CD8-positive, alpha-beta T cell (primary cell): ENCODE measurements at regions of chr14 and their contacts with region 1.

Region 1: DNA sequence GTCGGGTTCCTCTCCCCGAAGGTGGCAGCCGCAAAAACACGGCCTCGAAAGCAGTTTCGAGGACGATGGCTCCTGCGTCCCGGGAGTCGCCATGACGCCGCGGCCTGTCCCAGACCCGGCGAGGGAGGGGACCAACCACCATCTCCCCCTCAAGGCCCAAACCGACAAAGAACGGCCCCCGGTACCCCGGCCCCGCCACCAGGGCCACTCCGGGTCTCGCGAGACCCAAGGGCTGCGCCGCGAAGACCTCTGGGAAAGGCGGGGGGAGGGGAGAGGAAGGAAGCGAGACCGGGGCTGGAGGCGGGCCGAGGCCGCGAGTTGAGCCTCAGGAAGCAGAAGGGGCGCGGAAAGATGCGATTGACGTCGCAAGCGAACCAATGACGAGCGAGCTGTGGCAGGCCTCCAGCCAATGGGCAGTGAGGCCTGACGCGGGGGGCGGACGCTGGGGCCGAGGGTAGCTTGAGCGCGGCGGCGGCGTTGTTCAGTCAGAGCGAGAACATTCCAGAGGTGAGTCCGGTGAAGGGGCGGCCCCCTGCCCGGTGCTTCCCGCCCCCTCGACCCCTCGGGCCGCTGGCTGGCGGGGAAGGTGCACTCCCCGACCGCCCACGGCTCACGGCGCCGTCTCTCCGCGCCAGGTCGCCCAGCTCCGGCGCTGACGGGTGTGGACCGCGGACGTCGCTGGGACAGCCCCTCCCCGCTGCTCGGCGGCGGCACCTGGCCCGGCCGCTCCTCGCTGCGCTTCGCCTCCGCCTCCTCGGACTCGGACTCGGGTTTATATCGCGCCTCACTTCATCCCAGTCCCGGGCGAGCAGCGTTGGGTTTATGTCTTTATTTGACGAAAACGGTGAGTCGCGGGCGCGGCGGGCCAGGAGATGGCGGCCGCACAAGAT is at the start of gene EIF5:
- DNase-seq: peak; percentile 97 to 100 (median 99)
- ATAC-seq: peak; percentile 86
- H3K4me3 ChIP-seq: peak within 1 kb of the TSS; percentile 85 to 92
- H3K4me3 Mint-ChIP-seq: peak within 1 kb of the TSS; percentile 97
- H3K27ac ChIP-seq: peak within 1 kb of the TSS; percentile 95 to 96
- H3K27ac Mint-ChIP-seq: peak within 1 kb of the TSS; percentile 99
- H3K4me1 ChIP-seq: peaks cover 23% of the 10 kb centered on the region
- H3K4me1 Mint-ChIP-seq: peaks cover 41% of the 10 kb centered on the region
- H3K27me3 ChIP-seq: no peaks in the 10 kb centered on the region
- H3K27me3 Mint-ChIP-seq: no peaks in the 10 kb centered on the region
- CTCF ChIP-seq: peak; percentile 38
- total RNA-seq, gene EIF5: 711 to 754 TPM

Region 2: DNA sequence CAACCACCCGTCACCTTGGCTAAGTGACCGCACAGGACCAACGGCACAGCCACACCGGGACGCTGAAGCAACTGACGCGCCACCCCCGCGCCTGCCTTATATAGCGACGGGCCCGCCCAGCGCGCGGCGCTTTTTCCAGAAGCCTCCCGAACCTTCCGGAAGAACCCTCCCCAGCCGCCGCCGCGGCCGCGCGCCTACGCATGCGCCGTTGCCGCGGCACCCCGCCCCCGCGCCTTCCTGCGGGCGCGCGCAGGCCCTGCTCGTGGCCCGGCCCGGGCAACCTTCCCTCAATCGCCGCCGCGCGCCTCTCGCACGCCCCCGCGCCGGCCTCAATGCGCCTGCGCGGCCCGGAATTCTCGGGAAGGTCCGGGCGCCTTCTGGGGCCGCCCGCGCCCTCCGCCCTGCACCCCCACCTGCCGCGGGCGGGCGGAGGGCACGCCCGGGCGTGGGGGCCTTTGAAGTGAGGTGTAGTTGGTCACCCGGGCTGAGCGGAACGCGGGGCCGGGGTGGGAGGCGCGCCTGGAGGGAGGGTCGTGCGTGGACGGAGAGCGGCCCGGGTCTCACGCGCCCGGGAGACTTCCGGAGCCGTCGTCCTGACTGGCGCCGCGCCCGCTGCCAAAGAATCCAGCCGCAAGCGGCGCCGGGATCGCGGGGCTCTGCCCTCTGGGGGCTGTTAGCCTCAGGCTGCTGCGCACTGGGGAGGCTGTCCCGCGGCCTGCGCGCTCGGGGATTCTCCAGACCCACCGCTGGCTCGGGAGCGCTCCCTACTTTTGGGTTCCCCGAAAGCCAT is 1246.8 kb before region 1 on chr14 and contains the start of gene HSP90AA1:
- CTCF ChIA-PET with region 1: no interaction called
- POLR2A ChIA-PET with region 1: no interaction called
- intact Hi-C with region 1: loop called in 1 of 2 experiments (anchors 2 kb)
- DNase-seq: peak; percentile 88 to 98 (median 95)
- ATAC-seq: peak; percentile 74
- H3K4me3 ChIP-seq: peak within 1 kb of the TSS; percentile 75 to 78
- H3K4me3 Mint-ChIP-seq: peak within 1 kb of the TSS; percentile 97
- H3K27ac ChIP-seq: peak within 1 kb of the TSS; percentile 96 to 97
- H3K27ac Mint-ChIP-seq: peak within 1 kb of the TSS; percentile 99
- H3K4me1 ChIP-seq: peaks cover 49% of the 10 kb centered on the region
- H3K4me1 Mint-ChIP-seq: peaks cover 58% of the 10 kb centered on the region
- H3K27me3 ChIP-seq: no peaks in the 10 kb centered on the region
- H3K27me3 Mint-ChIP-seq: no peaks in the 10 kb centered on the region
- CTCF ChIP-seq: no peak
- total RNA-seq, gene HSP90AA1: 532 to 539 TPM

Region 3: DNA sequence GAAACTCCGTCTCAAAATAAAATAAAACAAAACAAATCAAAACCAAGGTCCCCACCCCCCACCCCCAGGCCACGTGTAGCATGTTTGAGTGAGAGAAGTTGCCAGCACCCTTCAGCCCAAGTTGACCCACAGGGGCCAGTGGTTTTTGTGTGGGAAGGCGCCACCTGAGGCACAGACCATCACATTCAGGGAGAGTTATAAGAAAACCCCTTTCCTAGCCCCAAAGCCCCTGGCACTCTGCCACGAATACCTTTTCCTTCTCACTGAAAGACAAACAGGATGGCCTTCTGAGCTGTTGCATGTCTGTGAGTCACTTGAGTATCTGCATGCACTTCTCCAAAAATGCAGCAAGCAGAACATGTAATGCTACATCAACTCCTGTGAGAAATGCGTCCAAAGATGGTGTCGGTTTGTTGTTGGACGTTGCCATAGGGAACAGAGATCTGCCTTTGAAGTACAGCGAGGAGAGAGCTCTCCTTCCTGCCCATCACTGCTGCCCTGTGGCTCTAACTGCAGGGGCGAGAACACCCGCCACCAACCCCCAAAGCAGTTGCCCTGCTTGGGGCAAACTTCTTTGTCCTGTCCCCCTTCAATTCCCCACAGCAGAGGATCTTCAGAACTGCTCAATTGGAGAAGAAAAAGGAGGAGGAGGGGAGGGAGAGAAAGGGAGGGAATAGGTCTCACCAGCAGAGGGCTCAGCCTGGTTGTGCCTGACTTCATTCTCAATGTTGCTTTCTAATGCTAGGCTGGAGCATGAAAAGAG is 559.4 kb before region 1 on chr14:
- CTCF ChIA-PET with region 1: no interaction called
- POLR2A ChIA-PET with region 1: no interaction called
- intact Hi-C with region 1: loop called (anchors 5 kb)
- DNase-seq: peak; percentile 32 to 87 (median 67)
- ATAC-seq: peak; percentile 32
- H3K4me3 ChIP-seq: no peak overlapping the region
- H3K4me3 Mint-ChIP-seq: peak overlapping the region; percentile 57
- H3K27ac ChIP-seq: peak overlapping the region; percentile 46 to 66
- H3K27ac Mint-ChIP-seq: peak overlapping the region; percentile 93
- H3K4me1 ChIP-seq: peaks cover 24% of the 10 kb centered on the region
- H3K4me1 Mint-ChIP-seq: peaks cover 28% of the 10 kb centered on the region
- H3K27me3 ChIP-seq: no peaks in the 10 kb centered on the region
- H3K27me3 Mint-ChIP-seq: no peaks in the 10 kb centered on the region
- CTCF ChIP-seq: peak; percentile 67

Region 4: GRCh38 chr14:103295972-103296371 is 38.0 kb before region 1 on chr14:
- CTCF ChIA-PET with region 1: no interaction called
- POLR2A ChIA-PET with region 1: no interaction called
- intact Hi-C with region 1: no loop called
- DNase-seq: no peak
- ATAC-seq: no peak
- H3K4me3 ChIP-seq: no peak overlapping the region
- H3K4me3 Mint-ChIP-seq: no peak overlapping the region
- H3K27ac ChIP-seq: no peak overlapping the region
- H3K27ac Mint-ChIP-seq: no peak overlapping the region
- H3K4me1 ChIP-seq: no peaks in the 10 kb centered on the region
- H3K4me1 Mint-ChIP-seq: no peaks in the 10 kb centered on the region
- H3K27me3 ChIP-seq: no peaks in the 10 kb centered on the region
- H3K27me3 Mint-ChIP-seq: peaks cover 10% of the 10 kb centered on the region
- CTCF ChIP-seq: no peak

Region 5: GRCh38 chr14:103385152-103385993 is 51.4 kb after region 1 on chr14 and contains the start of gene MARK3:
- CTCF ChIA-PET with region 1: interaction called, 3 read pairs
- POLR2A ChIA-PET with region 1: interaction called, 41 read pairs
- intact Hi-C with region 1: loop called (anchors 1 kb)
- DNase-seq: peak; percentile 91 to 98 (median 96)
- ATAC-seq: peak; percentile 88
- H3K4me3 ChIP-seq: peak within 1 kb of the TSS; percentile 72 to 73
- H3K4me3 Mint-ChIP-seq: peak within 1 kb of the TSS; percentile 97
- H3K27ac ChIP-seq: peak within 1 kb of the TSS; percentile 76 to 92
- H3K27ac Mint-ChIP-seq: peak within 1 kb of the TSS; percentile 96
- H3K4me1 ChIP-seq: peaks cover 26% of the 10 kb centered on the region
- H3K4me1 Mint-ChIP-seq: peaks cover 33% of the 10 kb centered on the region
- H3K27me3 ChIP-seq: no peaks in the 10 kb centered on the region
- H3K27me3 Mint-ChIP-seq: no peaks in the 10 kb centered on the region
- CTCF ChIP-seq: peak; percentile 16
- total RNA-seq, gene MARK3: 123 to 124 TPM

Region 6: DNA sequence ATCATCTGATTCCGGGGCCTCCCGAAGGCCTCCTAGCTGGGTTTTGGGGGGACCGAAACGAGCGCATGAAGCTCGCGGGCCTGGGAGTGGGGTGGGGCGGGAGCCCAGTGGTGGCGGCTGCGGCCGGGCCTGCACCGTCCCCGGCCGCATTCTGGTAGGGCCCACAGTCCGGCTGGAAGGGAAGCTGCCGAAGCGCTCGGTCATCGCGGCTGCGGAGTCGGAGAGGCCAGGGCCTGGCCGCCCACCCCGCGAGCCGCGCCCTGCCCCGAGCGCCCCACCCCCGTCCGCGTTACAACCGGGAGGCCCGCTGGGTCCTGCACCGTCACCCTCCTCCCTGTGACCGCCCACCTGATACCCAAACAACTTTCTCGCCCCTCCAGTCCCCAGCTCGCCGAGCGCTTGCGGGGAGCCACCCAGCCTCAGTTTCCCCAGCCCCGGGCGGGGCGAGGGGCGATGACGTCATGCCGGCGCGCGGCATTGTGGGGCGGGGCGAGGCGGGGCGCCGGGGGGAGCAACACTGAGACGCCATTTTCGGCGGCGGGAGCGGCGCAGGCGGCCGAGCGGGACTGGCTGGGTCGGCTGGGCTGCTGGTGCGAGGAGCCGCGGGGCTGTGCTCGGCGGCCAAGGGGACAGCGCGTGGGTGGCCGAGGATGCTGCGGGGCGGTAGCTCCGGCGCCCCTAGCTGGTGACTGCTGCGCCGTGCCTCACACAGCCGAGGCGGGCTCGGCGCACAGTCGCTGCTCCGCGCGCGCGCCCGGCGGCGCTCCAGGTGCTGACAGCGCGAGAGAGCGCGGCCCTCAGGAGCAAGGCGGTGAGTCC is 294.9 kb after region 1 on chr14 and contains the start of gene KLC1:
- CTCF ChIA-PET with region 1: no interaction called
- POLR2A ChIA-PET with region 1: interaction called, 4 read pairs
- intact Hi-C with region 1: loop called (anchors 2 to 10 kb)
- DNase-seq: peak; percentile 67 to 91 (median 85)
- ATAC-seq: peak; percentile 83
- H3K4me3 ChIP-seq: peak within 1 kb of the TSS; percentile 84 to 98
- H3K4me3 Mint-ChIP-seq: peak within 1 kb of the TSS; percentile 87
- H3K27ac ChIP-seq: peak within 1 kb of the TSS; percentile 81 to 87
- H3K27ac Mint-ChIP-seq: peak within 1 kb of the TSS; percentile 89
- H3K4me1 ChIP-seq: peaks cover 41% of the 10 kb centered on the region
- H3K4me1 Mint-ChIP-seq: peaks cover 47% of the 10 kb centered on the region
- H3K27me3 ChIP-seq: no peaks in the 10 kb centered on the region
- H3K27me3 Mint-ChIP-seq: no peaks in the 10 kb centered on the region
- CTCF ChIP-seq: no peak
- total RNA-seq, gene KLC1: 119 to 130 TPM